Naive thymus-derived CD4-positive, alpha-beta T cell (primary cell): ENCODE measurements at regions of chr2 and their contacts with region 1.

Region 1: GRCh38 chr2:158753641-158754611 is 41.2 kb upstream of the DAPL1 start:
- DNase-seq: peak in 5 of 9 donors; percentile 21 to 51 (median 42)
- ATAC-seq: peak; percentile 75
- H3K4me3 ChIP-seq: no peak overlapping the region
- H3K4me3 Mint-ChIP-seq: no peak overlapping the region
- H3K27ac ChIP-seq: no peak overlapping the region
- H3K27ac Mint-ChIP-seq: no peak overlapping the region
- H3K4me1 ChIP-seq: no peaks in the 10 kb centered on the region
- H3K4me1 Mint-ChIP-seq: no peaks in the 10 kb centered on the region
- H3K27me3 ChIP-seq: no peaks in the 10 kb centered on the region
- H3K27me3 Mint-ChIP-seq: peaks cover 0 to 29% (median 13%) of the 10 kb centered on the region in 5 donors

Region 2: GRCh38 chr2:157509744-157510143 is 1244.2 kb before region 1 on chr2:
- CTCF ChIA-PET with region 1: no interaction called
- POLR2A ChIA-PET with region 1: no interaction called
- intact Hi-C with region 1: loop called in 1 of 2 experiments (anchors 5 kb)
- DNase-seq: no peak
- ATAC-seq: no peak
- H3K4me3 ChIP-seq: no peak overlapping the region
- H3K4me3 Mint-ChIP-seq: no peak overlapping the region
- H3K27ac ChIP-seq: no peak overlapping the region
- H3K27ac Mint-ChIP-seq: no peak overlapping the region
- H3K4me1 ChIP-seq: no peaks in the 10 kb centered on the region
- H3K4me1 Mint-ChIP-seq: peaks cover 0 to 6% (median 0%) of the 10 kb centered on the region in 7 donors
- H3K27me3 ChIP-seq: no peaks in the 10 kb centered on the region
- H3K27me3 Mint-ChIP-seq: peaks cover 0 to 40% (median 17%) of the 10 kb centered on the region in 5 donors

Region 3: GRCh38 chr2:158024288-158024898 is 729.5 kb before region 1 on chr2:
- CTCF ChIA-PET with region 1: interaction called, 27 read pairs
- POLR2A ChIA-PET with region 1: no interaction called
- intact Hi-C with region 1: loop called (anchors 1 kb)
- DNase-seq: peak in 8 of 9 donors; percentile 14 to 60 (median 41)
- ATAC-seq: peak; percentile 70
- H3K4me3 ChIP-seq: no peak overlapping the region
- H3K4me3 Mint-ChIP-seq: no peak overlapping the region
- H3K27ac ChIP-seq: no peak overlapping the region
- H3K27ac Mint-ChIP-seq: no peak overlapping the region
- H3K4me1 ChIP-seq: no peaks in the 10 kb centered on the region
- H3K4me1 Mint-ChIP-seq: peaks cover 4 to 15% (median 9%) of the 10 kb centered on the region in 7 donors
- H3K27me3 ChIP-seq: no peaks in the 10 kb centered on the region
- H3K27me3 Mint-ChIP-seq: peaks cover 0 to 10% (median 0%) of the 10 kb centered on the region in 5 donors

Region 4: DNA sequence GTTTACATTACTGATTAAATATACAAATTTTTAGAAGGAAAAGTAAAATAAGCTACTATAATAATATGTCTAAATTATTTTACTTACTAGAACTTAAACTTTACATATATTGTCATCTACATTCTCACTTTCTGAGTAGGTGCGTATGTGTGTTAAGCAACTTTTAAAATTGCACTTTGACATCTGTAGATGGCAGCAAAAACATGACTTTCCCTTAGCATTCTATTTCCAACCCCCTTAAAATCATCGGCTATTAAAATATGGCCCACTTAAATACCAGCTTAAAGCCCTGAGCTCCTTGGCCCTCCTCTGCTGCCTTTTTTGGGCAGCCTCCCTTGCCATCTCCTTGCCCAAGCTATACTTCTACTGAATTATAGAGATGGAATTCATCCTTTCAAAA is 574.3 kb before region 1 on chr2:
- CTCF ChIA-PET with region 1: interaction called, 6 read pairs
- POLR2A ChIA-PET with region 1: no interaction called
- intact Hi-C with region 1: loop called (anchors 1 to 5 kb)
- DNase-seq: no peak
- ATAC-seq: no peak
- H3K4me3 ChIP-seq: no peak overlapping the region
- H3K4me3 Mint-ChIP-seq: no peak overlapping the region
- H3K27ac ChIP-seq: no peak overlapping the region
- H3K27ac Mint-ChIP-seq: no peak overlapping the region
- H3K4me1 ChIP-seq: no peaks in the 10 kb centered on the region
- H3K4me1 Mint-ChIP-seq: peaks cover 0 to 2% (median 0%) of the 10 kb centered on the region in 7 donors
- H3K27me3 ChIP-seq: peaks cover 0 to 5% of the 10 kb centered on the region in 2 donors
- H3K27me3 Mint-ChIP-seq: peaks cover 39 to 49% (median 47%) of the 10 kb centered on the region in 5 donors